ENCODE measurements at regions of chr16 and their contacts with region 1.

Region 1: GRCh38 chr16:24504472-24505345 is 34.7 kb upstream of the RBBP6 start:
- DNase-seq: peak; percentile 67
- H3K4me3 ChIP-seq: no peak overlapping the region
- H3K27ac ChIP-seq: no peak overlapping the region
- H3K4me1 ChIP-seq: no peaks in the 10 kb centered on the region
- H3K27me3 ChIP-seq: peaks cover 0 to 3% of the 10 kb centered on the region in 2 experiments
- CTCF ChIP-seq: peak; percentile 70 to 73
- POLR2A ChIP-seq: no peak

Region 2: GRCh38 chr16:23803591-23804123 is 701.1 kb before region 1 on chr16:
- CTCF ChIA-PET with region 1: interaction called, 45 read pairs
- POLR2A ChIA-PET with region 1: no interaction called
- dilution Hi-C with region 1: no loop called
- intact Hi-C with region 1: loop called (anchors 1 kb)
- DNase-seq: peak; percentile 15
- H3K4me3 ChIP-seq: no peak overlapping the region
- H3K27ac ChIP-seq: no peak overlapping the region
- H3K4me1 ChIP-seq: no peaks in the 10 kb centered on the region
- H3K27me3 ChIP-seq: no peaks in the 10 kb centered on the region
- CTCF ChIP-seq: peak; percentile 16 to 37
- POLR2A ChIP-seq: no peak

Region 3: GRCh38 chr16:24041826-24042631 is 462.7 kb before region 1 on chr16:
- CTCF ChIA-PET with region 1: interaction called, 170 read pairs
- POLR2A ChIA-PET with region 1: no interaction called
- dilution Hi-C with region 1: no loop called
- intact Hi-C with region 1: loop called (anchors 1 kb)
- DNase-seq: peak; percentile 53
- H3K4me3 ChIP-seq: no peak overlapping the region
- H3K27ac ChIP-seq: no peak overlapping the region
- H3K4me1 ChIP-seq: no peaks in the 10 kb centered on the region
- H3K27me3 ChIP-seq: no peaks in the 10 kb centered on the region
- CTCF ChIP-seq: peak; percentile 71 to 77
- POLR2A ChIP-seq: no peak

Region 4: GRCh38 chr16:24070851-24071250 is 433.9 kb before region 1 on chr16:
- CTCF ChIA-PET with region 1: interaction called, 104 read pairs
- POLR2A ChIA-PET with region 1: no interaction called
- dilution Hi-C with region 1: no loop called
- intact Hi-C with region 1: loop called (anchors 1 kb)
- DNase-seq: peak; percentile 55
- H3K4me3 ChIP-seq: no peak overlapping the region
- H3K27ac ChIP-seq: no peak overlapping the region
- H3K4me1 ChIP-seq: no peaks in the 10 kb centered on the region
- H3K27me3 ChIP-seq: no peaks in the 10 kb centered on the region
- CTCF ChIP-seq: peak; percentile 63 to 75
- POLR2A ChIP-seq: no peak

Region 5: DNA sequence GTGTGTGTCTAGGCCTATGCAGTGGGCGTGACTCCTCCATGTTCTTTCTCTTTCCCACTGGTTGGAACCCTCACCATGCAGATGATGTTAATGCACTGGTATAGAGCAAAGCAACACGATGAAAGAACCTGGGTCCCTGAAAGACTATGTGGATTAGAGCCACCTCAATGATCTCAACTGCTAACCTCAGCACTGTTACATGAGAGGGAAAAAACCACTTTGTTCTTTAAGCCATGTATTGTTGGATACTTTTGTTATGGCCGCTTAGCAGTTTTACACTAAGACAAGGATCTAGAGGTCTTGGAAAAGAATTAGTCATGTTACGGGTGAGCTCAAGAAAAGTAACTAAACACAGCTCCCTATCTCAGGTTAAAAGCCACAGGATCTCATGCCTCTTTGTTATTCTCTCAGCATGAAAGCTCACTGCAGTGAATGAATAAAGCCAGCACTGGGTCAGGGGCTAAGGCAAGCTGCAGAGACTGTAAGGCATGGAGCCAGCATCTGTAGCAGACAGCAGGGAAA is 22.0 kb before region 1 on chr16:
- CTCF ChIA-PET with region 1: interaction called, 11 read pairs
- POLR2A ChIA-PET with region 1: no interaction called
- dilution Hi-C with region 1: no loop called
- intact Hi-C with region 1: no loop called
- DNase-seq: no peak
- H3K4me3 ChIP-seq: no peak overlapping the region
- H3K27ac ChIP-seq: no peak overlapping the region
- H3K4me1 ChIP-seq: no peaks in the 10 kb centered on the region
- H3K27me3 ChIP-seq: no peaks in the 10 kb centered on the region
- CTCF ChIP-seq: no peak
- POLR2A ChIP-seq: no peak

Region 6: DNA sequence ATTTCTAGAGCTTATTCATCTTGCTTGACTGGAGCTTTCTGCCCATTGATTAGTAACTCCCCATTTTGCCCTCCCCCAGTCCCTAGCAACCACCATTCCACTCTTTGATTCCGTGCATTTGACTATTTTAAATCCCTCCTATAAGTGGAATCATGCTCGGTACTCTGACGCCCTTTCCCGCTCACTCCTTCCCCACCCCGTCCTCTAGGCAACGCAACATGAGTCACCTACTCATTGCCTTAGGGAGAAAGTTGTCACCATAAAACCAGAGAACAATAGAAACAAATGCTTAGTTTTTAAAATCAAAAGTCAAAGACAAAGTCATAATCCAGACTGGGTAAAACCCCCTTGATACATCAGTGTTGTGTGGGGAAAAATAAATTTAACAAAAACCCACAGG is 10.8 kb before region 1 on chr16:
- CTCF ChIA-PET with region 1: interaction called, 10 read pairs
- POLR2A ChIA-PET with region 1: no interaction called
- dilution Hi-C with region 1: no loop called
- intact Hi-C with region 1: no loop called
- DNase-seq: no peak
- H3K4me3 ChIP-seq: no peak overlapping the region
- H3K27ac ChIP-seq: no peak overlapping the region
- H3K4me1 ChIP-seq: no peaks in the 10 kb centered on the region
- H3K27me3 ChIP-seq: no peaks in the 10 kb centered on the region
- CTCF ChIP-seq: no peak
- POLR2A ChIP-seq: no peak

Region 7: DNA sequence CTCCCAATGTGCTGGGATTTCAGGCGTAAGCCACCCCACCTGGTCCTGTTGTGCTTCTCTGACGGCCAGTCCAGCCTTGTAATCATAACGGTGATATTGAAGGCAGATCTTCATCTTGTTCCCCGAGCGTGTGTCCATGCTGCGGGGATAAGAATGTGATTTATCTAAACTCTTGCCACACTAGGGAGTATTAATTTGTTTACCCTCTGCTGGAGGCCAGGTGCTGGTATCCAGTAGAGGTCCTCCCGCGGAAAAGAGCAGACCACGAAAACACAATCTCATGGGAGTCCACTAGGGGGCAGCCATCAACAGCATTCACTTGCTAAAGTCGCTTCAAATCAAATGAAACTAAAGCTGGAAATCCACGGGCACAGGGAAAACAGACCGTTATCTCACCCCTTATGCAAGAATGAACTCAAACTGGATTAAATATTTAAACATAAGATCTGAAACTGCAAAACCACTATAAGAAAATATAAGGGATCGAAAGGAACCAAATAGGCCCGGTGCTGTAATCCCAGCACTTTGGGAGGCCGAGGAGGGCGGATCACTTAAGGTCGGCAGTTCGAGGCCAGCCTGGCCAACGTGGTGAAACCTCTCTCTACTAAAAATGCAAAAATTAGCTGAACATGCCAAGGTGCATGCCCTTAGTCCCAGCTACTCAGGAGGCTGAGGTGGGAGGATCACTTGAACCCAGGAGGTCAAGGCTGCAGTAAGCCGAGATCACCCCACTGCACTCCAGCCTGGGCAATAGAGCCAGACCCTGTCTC is 12.4 kb after region 1 on chr16:
- CTCF ChIA-PET with region 1: interaction called, 70 read pairs
- POLR2A ChIA-PET with region 1: no interaction called
- dilution Hi-C with region 1: no loop called
- intact Hi-C with region 1: no loop called
- DNase-seq: peak; percentile 89
- H3K4me3 ChIP-seq: no peak overlapping the region
- H3K27ac ChIP-seq: no peak overlapping the region
- H3K4me1 ChIP-seq: no peaks in the 10 kb centered on the region
- H3K27me3 ChIP-seq: peaks cover 0 to 1% of the 10 kb centered on the region in 2 experiments
- CTCF ChIP-seq: peak; percentile 89 to 93
- POLR2A ChIP-seq: no peak